GM10248 (cell line): ENCODE measurements at regions of chr13 and their contacts with region 1.

Region 1: DNA sequence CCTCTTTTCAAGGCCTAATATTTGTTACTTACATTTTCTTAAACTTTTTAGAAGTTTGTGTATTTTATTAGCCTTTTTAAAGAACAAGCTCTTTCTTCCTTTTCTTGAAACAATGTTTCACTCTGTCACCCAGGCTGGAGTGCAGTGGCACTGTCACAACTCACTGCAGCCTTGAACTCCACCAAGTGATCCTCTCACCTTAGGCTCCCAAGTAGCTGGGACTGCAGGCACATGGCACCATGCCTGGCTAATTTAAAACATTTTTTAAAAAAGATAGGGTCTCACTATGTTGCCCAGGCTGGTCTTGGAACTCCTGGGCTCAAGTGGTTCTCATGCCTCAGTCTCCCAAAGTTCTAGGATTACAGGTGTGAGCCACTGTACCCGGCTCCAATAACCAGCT is 192.2 kb upstream of the SPRY2 start:
- DNase-seq: no peak
- CTCF ChIP-seq: no peak

Region 2: DNA sequence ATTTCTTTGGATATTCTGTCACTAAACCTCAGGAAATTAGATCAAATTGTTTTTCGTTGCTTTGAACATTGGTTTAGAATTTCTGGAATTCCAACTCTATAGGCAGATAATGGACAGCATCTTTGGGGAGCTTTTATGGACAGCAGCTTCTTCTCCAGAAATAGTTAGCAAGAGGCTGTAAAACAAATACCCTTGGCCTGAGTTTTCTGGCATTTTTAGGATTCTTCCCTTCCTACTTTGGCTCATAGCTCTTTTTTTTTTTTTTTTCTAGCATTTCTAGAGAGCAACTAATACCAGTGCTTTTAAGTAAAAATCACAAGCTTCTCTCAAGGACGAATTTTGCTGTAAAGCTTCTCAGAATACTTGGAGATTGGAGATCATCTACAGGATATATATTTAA is 22.5 kb before region 1 on chr13:
- CTCF ChIA-PET with region 1: no interaction called
- POLR2A ChIA-PET with region 1: no interaction called
- DNase-seq: no peak
- CTCF ChIP-seq: no peak

Region 3: DNA sequence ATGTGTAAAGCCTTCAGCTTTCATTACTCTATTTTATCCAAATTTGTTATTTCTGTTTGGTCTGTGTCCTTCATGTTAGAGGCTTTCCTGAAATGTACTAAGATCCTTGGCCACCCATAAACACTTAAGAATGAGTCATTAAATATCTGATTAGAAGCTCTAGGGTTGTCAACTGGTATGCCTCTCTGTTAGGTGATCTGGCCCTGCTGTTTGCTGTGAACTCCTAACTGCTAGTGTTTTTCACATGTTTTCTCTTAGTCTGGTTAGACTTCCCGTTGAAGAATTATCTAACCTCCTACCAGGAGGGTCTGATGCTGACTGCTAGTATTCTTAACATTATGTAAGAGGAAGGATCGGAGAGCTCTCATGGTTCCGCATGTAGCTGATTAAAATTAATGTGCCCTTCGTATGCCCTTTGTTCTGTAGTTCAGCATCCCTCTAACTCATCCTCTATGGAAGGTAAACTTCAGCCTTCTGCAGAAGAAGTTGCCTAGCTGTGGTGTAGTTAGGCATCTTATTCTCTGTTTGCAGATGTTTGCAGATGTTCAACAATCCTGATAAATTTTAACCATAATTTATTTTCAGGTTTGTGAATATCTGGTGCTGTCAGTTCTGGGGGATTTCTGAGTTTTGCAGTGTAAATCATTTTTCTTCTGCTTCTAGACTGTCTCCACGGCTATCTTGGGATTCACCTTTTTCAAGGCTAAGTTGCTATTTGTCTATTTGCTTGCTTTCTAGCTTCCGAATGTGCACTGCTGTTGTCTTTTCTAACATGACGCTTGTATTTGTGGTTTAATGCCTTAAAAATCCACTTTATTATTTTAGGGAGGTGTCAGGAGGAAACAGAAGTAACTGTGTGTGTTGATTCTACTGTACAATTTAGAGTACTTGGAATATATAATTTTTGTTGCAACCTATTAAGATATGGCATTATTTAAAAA is 15.0 kb after region 1 on chr13:
- CTCF ChIA-PET with region 1: interaction called, 10 read pairs
- POLR2A ChIA-PET with region 1: no interaction called
- DNase-seq: no peak
- CTCF ChIP-seq: no peak